Thyroid gland (tissue), 4 donors: ENCODE measurements at regions of chr18 and their contacts with region 1.

Region 1: DNA sequence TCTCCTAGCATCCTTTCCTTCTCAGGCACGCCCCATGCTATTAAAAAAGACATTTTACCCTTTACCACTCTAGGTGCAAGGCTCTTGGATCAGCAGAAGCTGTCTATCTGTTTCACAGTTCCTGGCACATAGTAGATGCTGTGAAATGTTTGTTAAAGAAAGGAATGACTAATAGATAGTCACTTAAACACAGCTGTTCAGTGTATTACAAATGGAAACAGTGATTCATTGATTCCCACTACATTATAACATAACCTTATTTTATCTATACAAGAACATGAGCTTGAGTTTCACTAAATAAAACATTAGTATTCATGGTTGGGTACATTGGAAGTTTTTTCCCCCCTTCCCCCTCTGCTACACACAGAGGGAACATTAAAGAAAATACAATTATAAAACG is 142.1 kb downstream of the ASXL3 start:
- DNase-seq: no peak
- H3K4me3 ChIP-seq: no peak overlapping the region
- H3K27ac ChIP-seq: no peak overlapping the region
- H3K4me1 ChIP-seq: no peaks in the 10 kb centered on the region
- H3K27me3 ChIP-seq: no peaks in the 10 kb centered on the region
- CTCF ChIP-seq: no peak
- POLR2A ChIP-seq: no peak

Region 2: DNA sequence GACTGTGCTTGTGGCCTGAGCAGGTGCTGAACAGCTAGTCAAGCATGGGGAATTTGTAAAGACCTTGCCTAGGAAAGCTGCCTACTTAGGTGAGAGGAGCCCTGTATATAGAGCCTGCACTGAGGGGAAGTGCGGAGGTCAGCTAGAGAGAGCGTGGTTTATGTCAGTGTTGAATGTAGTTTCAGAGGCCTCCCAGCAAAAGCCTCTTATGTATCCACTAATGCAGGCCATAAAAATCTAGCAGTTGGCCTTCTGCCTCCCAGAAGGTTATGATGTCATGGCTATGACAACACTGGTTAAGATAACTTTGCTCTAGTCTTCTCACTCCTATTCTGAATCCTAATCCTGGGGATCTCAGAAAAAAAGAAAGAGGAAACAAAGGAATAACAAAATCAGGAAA is 53.2 kb before region 1 on chr18:
- intact Hi-C with region 1: loop called (anchors 10 kb)
- DNase-seq: no peak
- H3K4me3 ChIP-seq: no peak overlapping the region
- H3K27ac ChIP-seq: no peak overlapping the region
- H3K4me1 ChIP-seq: no peaks in the 10 kb centered on the region
- H3K27me3 ChIP-seq: no peaks in the 10 kb centered on the region
- CTCF ChIP-seq: no peak
- POLR2A ChIP-seq: no peak